Activated naive CD4-positive, alpha-beta T cell treated with anti-CD3 and anti-CD28 coated beads for 36 hours (primary cell): ENCODE measurements at regions of chr2 and their contacts with region 1.

Region 1: DNA sequence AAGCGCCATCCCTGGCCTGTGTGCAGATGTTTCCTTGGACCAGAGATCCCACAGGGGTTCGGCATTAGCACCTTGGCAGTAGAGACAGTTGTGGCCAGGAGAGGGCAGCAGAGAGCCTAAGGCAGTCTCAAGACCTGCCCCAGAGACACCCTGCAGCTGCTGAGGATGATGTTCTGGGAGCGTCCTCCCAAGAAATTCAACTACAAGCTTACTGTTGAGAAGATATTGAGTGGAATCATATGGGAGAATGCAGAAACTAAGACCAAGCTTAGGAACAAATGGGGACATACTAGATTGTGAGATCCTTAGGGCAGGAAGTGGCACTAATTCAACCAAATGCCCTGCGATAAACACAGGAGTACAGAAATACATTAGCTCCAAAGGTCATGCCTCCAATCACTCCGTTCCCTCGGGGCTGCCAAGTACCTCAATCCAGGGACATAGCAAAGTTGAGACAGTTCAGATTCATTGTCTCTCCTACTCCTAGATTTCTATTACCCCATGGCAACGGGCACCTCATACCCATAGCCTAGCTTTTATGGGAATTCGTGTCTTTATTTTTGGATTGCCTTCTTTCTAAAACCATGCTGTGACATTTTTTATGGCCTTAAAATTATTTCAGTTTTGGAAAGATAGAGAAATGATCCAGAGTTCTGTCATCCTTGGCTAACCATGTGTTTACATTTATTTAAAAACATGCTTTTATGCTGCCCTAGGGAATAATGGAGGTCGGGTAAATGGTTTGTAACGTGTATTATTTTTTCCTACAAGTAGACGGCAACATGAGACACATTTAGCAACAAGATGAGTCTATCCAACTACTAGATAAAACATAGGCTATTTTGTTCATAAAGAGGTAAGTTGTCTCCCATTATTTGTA is 2.2 kb upstream of the ERMN start:
- DNase-seq: peak; percentile 95
- H3K4me3 Mint-ChIP-seq: peak overlapping the region; percentile 52
- H3K27ac Mint-ChIP-seq: peak overlapping the region; percentile 82
- H3K4me1 Mint-ChIP-seq: peaks cover 63% of the 10 kb centered on the region
- H3K27me3 Mint-ChIP-seq: no peaks in the 10 kb centered on the region

Region 2: DNA sequence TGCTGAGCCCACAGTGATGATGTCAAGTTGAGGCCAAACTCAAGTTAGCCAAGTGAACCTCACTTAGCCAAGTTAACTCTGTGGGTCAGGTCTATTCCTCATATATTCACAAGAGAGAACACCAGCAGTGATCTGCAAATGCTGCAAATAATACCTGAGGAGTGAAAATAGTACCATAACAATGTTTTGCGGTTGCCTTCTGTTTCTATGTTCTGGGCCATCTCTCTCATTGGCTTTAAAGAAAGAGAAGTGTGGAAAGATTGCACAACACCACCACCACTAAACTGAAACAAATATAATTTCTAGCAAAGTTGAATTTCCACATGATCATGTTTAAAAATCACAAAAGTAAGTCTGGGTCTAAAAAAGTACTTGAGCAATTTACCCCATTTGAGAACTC is 281.5 kb before region 1 on chr2:
- CTCF ChIA-PET with region 1: no interaction called
- intact Hi-C with region 1: no loop called
- DNase-seq: no peak
- H3K4me3 Mint-ChIP-seq: no peak overlapping the region
- H3K27ac Mint-ChIP-seq: no peak overlapping the region
- H3K4me1 Mint-ChIP-seq: no peaks in the 10 kb centered on the region
- H3K27me3 Mint-ChIP-seq: no peaks in the 10 kb centered on the region

Region 3: GRCh38 chr2:157221394-157221988 is 106.4 kb before region 1 on chr2:
- CTCF ChIA-PET with region 1: no interaction called
- intact Hi-C with region 1: no loop called
- DNase-seq: no peak
- H3K4me3 Mint-ChIP-seq: no peak overlapping the region
- H3K27ac Mint-ChIP-seq: no peak overlapping the region
- H3K4me1 Mint-ChIP-seq: no peaks in the 10 kb centered on the region
- H3K27me3 Mint-ChIP-seq: peaks cover 4% of the 10 kb centered on the region

Region 4: GRCh38 chr2:157302492-157303099 is 25.3 kb before region 1 on chr2:
- CTCF ChIA-PET with region 1: interaction called, 263 read pairs
- intact Hi-C with region 1: loop called (anchors 1 kb)
- DNase-seq: peak; percentile 51
- H3K4me3 Mint-ChIP-seq: peak overlapping the region; percentile 3
- H3K27ac Mint-ChIP-seq: no peak overlapping the region
- H3K4me1 Mint-ChIP-seq: peaks cover 34% of the 10 kb centered on the region
- H3K27me3 Mint-ChIP-seq: no peaks in the 10 kb centered on the region

Region 5: GRCh38 chr2:157363612-157364101 is 35.8 kb after region 1 on chr2:
- CTCF ChIA-PET with region 1: interaction called, 10 read pairs
- intact Hi-C with region 1: no loop called
- DNase-seq: no peak
- H3K4me3 Mint-ChIP-seq: peak overlapping the region; percentile 3
- H3K27ac Mint-ChIP-seq: peak overlapping the region; percentile 65
- H3K4me1 Mint-ChIP-seq: peaks cover 36% of the 10 kb centered on the region
- H3K27me3 Mint-ChIP-seq: no peaks in the 10 kb centered on the region

Region 6: DNA sequence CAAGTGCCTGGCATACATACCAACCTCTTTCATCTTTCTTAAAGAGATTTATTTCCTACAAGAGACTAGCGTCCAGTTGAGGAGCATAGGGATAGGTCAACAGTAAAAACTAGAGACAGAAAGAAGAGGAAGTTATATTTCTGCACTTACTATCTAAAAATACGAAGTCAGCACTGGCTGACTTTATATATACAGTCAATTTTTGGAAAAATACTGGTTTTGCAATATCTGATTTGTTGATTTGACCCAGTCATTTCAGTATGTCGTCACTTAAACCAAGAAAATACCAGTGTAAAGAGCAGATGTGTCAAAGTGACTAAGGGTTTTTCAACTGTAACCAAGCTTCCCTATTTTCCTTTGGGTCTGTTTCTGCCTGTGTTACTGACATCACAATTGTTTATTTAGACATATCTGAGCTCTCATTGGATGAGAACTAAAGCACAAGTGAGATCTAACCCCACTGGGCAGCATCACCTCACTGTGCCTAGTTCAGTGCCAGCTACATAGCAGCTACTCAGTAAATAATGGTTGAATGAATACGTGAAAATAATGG is 93.0 kb after region 1 on chr2:
- CTCF ChIA-PET with region 1: interaction called, 21 read pairs
- intact Hi-C with region 1: no loop called
- DNase-seq: peak; percentile 66
- H3K4me3 Mint-ChIP-seq: peak overlapping the region; percentile 33
- H3K27ac Mint-ChIP-seq: peak overlapping the region; percentile 95
- H3K4me1 Mint-ChIP-seq: peaks cover 79% of the 10 kb centered on the region
- H3K27me3 Mint-ChIP-seq: no peaks in the 10 kb centered on the region

Region 7: DNA sequence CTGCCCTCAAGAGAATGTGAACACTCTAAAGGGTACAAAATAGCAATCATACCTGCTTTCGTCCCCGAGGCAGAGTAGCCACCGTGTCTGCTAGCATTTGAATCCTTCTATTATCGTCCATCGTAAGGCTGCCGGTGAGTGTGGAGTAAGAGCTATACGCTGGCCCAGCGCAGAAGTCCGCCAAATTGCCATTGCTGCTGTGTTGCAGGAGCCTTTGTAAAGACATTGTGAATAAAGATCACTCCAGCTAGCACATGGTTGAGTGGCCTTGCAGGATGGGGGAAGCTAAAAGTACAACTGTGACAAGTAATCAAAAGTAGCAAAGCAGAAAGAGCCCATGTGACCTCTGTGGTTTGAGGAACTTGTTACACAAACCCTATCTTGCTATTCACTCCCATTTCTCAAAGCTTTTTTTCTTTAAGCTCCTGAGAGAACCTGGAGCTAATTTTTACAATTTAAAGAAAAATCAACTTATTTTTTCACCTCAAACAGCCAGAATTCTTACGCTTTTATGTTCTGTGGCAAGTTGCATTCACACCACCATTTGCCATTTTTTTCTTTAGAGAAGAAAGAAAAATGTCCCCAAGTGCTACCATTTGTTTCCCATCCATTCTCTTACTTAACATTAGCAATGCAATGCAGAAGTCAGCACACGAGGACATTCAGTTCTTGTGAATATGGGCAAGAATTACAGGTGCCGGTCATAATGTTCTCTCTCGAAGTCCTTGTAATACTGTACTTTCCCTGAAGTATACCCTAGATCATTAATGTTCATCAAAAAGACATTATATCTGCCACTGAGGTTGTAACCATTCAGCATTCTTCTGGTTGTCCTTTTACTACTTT is 116.2 kb after region 1 on chr2 and contains the start of gene CYTIP:
- CTCF ChIA-PET with region 1: interaction called, 16 read pairs
- intact Hi-C with region 1: no loop called
- DNase-seq: peak; percentile 84
- H3K4me3 Mint-ChIP-seq: peak within 1 kb of the TSS; percentile 97
- H3K27ac Mint-ChIP-seq: peak within 1 kb of the TSS; percentile 100
- H3K4me1 Mint-ChIP-seq: peaks cover 40% of the 10 kb centered on the region
- H3K27me3 Mint-ChIP-seq: no peaks in the 10 kb centered on the region
- total RNA-seq, gene CYTIP: 599 to 610 TPM

Region 8: DNA sequence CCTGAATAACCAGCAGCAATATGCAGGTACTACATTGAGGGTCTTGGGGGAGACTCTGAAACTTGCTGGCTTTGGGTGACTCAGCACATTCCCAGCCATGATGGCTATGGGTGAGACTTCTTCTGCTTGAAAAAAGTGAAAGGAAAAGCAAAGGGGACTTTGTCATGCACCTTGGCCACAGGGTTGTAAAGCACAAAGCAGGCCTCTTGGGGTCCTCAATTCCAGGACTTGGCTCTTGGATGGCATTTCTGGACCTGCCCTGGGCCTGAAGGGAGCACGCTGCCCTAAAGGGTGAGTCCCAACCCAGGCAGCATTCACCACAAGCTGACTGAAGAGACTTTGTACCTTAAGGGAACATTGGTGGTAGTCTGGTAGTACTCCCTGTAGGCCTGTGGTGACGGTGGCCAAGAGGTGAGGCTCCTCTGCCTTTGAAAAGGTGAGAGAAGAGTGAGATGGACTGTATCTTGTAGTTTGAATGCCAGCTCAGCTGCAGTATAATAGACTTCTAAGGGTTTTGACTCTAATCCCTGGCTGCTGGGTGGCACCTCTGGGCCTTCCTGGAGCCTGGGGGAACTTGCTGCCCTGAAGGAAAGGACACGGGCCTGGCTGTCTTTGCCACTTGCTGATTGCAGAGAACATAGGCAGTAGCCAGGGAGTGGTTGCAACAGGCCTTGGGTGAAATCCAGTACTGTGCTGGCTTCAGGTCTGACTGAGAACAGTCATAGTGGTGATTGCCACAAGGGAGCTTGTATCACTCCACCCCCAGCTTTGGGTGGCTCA is 152.5 kb after region 1 on chr2:
- CTCF ChIA-PET with region 1: interaction called, 12 read pairs
- intact Hi-C with region 1: loop called (anchors 1 kb)
- DNase-seq: peak; percentile 83
- H3K4me3 Mint-ChIP-seq: peak overlapping the region; percentile 64
- H3K27ac Mint-ChIP-seq: peak overlapping the region; percentile 95
- H3K4me1 Mint-ChIP-seq: peaks cover 85% of the 10 kb centered on the region
- H3K27me3 Mint-ChIP-seq: no peaks in the 10 kb centered on the region

Region 9: GRCh38 chr2:157509744-157510143 is 181.9 kb after region 1 on chr2:
- CTCF ChIA-PET with region 1: interaction called, 10 read pairs
- intact Hi-C with region 1: no loop called
- DNase-seq: no peak
- H3K4me3 Mint-ChIP-seq: no peak overlapping the region
- H3K27ac Mint-ChIP-seq: no peak overlapping the region
- H3K4me1 Mint-ChIP-seq: peaks cover 3% of the 10 kb centered on the region
- H3K27me3 Mint-ChIP-seq: peaks cover 3% of the 10 kb centered on the region